ENCODE measurements at regions of chr15 and their contacts with region 1.

Region 1: DNA sequence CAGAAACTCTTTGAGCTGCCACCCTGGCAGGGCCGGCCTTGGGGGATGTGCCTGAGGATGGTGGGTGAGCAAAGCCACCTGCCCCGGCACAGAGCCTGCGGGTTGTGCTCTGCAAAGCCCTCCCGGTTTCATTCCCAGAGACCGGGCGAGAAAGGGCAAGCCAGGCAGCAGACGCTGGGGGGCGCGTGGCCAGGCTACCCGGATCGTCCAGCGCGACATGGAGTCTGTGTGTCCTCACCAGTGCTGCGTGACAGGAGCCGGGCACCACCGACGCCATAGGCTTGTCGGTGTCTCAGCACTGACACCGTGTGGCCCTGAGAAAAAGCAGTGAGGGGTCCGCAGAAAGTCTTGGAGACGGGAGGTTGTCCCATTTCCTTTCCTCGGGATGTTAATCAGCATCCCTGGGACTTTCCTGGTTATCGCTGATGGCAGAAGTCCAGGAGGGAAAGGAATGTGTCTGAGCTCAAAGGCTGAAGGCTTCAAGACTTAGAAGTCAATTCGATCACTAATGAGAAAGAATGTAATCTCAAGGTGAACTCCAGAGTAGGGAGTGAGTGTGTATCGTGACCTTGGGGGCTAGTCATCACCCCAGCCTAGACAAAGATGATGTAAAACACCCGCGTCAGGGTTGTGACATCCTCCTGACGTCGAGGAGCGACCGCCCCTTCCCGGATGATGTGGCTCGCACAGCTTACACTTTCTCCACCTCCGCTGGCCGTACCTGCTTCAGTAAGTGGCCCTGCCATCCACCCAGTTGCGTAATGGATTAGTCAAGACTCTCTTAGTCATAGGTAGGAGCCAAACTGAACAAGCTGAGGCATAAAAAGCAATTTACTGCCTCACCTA is 36.3 kb upstream of the PLA2G4E start:
- DNase-seq: peak; percentile 81 to 92
- ATAC-seq: peak; percentile 90 to 97 (median 95)
- H3K4me3 ChIP-seq: peak overlapping the region; percentile 46
- H3K27ac ChIP-seq: no peak overlapping the region
- H3K4me1 ChIP-seq: peaks cover 21% of the 10 kb centered on the region
- H3K27me3 ChIP-seq: no peaks in the 10 kb centered on the region
- CTCF ChIP-seq: peak; percentile 77

Region 2: DNA sequence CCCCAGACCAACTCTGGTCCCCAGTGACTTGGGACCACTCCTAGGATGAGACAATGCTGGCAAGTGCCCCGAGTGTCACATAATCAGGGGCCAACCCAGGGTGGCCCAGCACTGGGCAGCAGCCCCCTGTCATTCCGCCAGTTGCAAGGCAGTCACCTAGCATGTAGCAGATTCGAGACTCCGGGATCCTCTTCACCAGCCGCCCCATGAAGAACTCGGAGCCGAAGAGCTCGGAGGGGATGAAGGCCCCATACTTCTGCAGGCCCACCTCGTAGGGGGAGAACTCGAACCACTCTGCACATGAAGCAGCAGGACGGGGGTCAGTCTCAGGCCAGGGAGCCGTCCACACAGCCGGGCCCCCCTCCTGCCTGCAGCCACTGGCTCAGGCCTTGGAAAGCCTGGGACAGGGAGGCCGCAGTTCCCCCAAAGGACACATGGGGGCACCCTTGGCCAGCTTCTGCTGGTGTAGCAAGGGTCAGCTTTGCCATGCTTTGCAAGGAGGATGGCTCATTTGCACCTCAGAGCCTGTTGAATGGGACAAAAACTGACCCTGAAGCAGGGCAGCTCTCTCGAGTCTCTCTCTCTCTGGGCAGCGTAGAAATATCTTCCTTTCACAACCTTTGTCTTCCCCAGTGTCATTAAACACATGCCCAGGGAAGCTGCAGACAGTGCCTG is 67.8 kb before region 1 on chr15:
- intact Hi-C with region 1: loop called (anchors 1 to 2 kb)
- DNase-seq: peak; percentile 82 to 91
- ATAC-seq: peak; percentile 90 to 98 (median 96)
- H3K4me3 ChIP-seq: no peak overlapping the region
- H3K27ac ChIP-seq: no peak overlapping the region
- H3K4me1 ChIP-seq: no peaks in the 10 kb centered on the region
- H3K27me3 ChIP-seq: no peaks in the 10 kb centered on the region
- CTCF ChIP-seq: peak; percentile 99